ENCODE measurements at regions of chr22 and their contacts with region 1.

Region 1: DNA sequence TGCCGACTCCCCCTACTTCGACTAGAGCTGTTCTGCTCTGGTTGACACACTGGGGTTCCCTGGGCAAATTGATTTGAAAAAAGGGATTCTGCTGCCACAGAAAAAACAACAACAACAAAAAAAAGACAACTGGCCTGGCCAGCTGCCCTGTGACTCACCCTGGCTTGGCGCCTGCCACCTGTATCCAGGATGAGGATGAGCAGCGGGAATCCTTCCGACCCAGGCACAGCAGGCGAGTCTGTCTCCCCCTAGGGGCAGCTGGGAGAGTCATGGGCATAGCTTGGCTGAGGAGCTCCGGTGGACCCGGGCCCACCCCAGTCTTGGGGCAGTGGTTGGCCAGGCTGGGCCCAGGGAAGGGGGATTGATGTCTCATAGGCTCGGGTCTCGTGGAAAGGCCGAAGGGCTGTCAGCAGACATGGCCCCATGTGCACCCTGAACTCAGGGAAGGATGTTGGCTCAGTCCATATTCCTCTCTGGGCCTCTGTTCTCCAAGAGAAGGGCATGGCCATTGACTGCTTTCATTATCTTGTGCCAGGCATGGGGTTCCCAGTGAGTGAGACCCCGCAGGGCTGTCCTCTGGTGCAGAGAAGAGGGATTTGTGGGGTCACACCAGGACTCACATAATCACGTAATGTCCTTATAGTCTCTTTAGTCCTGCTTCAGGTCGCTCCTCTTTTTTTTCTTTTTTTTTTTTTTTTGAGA is 10.4 kb upstream of the SUN2 start:
- DNase-seq: no peak
- ATAC-seq: no peak
- H3K4me3 ChIP-seq: no peak overlapping the region
- H3K27ac ChIP-seq: no peak overlapping the region
- H3K4me1 ChIP-seq: no peaks in the 10 kb centered on the region
- H3K27me3 ChIP-seq: no peaks in the 10 kb centered on the region

Region 2: DNA sequence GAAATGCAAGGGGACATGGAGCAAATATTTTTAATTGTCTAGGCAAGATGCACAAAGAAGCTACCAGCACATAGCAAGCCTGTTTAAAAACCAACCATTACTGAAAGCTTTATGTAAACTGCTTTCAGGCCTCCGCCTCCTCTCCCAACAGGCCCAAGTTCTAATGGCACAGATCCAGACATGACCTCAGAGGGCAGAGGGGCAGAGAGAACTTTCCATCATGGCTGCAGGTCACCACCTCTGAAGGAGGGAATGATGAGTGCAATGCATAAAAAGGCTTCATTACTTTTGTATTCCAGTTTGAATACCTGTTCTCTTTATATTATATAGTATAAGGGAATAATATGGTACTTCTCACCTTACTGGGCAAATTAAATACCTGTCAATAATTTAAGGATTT is 275.3 kb before region 1 on chr22:
- intact Hi-C with region 1: no loop called
- DNase-seq: peak in 1 of 2 donors; percentile 79
- ATAC-seq: peak; percentile 87
- H3K4me3 ChIP-seq: no peak overlapping the region
- H3K27ac ChIP-seq: no peak overlapping the region
- H3K4me1 ChIP-seq: no peaks in the 10 kb centered on the region
- H3K27me3 ChIP-seq: no peaks in the 10 kb centered on the region

Region 3: DNA sequence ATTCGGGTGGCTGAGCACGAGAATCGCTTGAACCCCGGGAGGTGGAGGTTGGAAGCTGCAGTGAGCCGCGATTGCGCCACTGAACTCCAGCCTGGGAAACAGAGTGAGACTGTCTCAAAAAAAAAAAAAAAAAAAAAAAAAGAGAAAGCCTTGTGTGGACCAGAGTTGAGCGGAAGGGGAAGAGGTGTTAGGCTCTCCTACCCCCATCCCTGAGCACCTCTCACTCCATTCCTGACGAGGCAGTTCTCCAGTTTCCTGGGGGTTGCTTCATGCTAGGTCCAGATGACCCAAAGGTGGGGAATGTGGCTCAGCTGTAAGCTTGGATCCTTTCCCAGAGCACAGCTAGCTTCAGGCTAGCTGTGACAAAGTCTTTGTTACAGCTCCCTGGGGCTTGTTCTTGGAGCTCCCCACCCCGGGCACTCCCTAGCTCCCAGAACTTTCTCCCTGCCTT is 36.5 kb after region 1 on chr22:
- intact Hi-C with region 1: no loop called
- DNase-seq: peak in 1 of 2 donors; percentile 71
- ATAC-seq: peak; percentile 73
- H3K4me3 ChIP-seq: no peak overlapping the region
- H3K27ac ChIP-seq: no peak overlapping the region
- H3K4me1 ChIP-seq: no peaks in the 10 kb centered on the region
- H3K27me3 ChIP-seq: no peaks in the 10 kb centered on the region

Region 4: GRCh38 chr22:38862375-38863329 is 96.4 kb after region 1 on chr22:
- intact Hi-C with region 1: loop called in 1 of 2 experiments (anchors 5 kb)
- DNase-seq: peak; percentile 83 to 90
- ATAC-seq: peak; percentile 62
- H3K4me3 ChIP-seq: no peak overlapping the region
- H3K27ac ChIP-seq: peak overlapping the region in 1 of 2 donors; percentile 7
- H3K4me1 ChIP-seq: peaks cover 0 to 3% of the 10 kb centered on the region in 2 donors
- H3K27me3 ChIP-seq: no peaks in the 10 kb centered on the region

Region 5: GRCh38 chr22:38927033-38927781 is 161.0 kb after region 1 on chr22:
- intact Hi-C with region 1: loop called in 1 of 2 experiments (anchors 10 kb)
- DNase-seq: peak; percentile 87 to 92
- ATAC-seq: peak; percentile 69
- H3K4me3 ChIP-seq: peak overlapping the region in 1 of 2 donors; percentile 36
- H3K27ac ChIP-seq: peak overlapping the region in 1 of 2 donors; percentile 21
- H3K4me1 ChIP-seq: no peaks in the 10 kb centered on the region
- H3K27me3 ChIP-seq: no peaks in the 10 kb centered on the region

Region 6: DNA sequence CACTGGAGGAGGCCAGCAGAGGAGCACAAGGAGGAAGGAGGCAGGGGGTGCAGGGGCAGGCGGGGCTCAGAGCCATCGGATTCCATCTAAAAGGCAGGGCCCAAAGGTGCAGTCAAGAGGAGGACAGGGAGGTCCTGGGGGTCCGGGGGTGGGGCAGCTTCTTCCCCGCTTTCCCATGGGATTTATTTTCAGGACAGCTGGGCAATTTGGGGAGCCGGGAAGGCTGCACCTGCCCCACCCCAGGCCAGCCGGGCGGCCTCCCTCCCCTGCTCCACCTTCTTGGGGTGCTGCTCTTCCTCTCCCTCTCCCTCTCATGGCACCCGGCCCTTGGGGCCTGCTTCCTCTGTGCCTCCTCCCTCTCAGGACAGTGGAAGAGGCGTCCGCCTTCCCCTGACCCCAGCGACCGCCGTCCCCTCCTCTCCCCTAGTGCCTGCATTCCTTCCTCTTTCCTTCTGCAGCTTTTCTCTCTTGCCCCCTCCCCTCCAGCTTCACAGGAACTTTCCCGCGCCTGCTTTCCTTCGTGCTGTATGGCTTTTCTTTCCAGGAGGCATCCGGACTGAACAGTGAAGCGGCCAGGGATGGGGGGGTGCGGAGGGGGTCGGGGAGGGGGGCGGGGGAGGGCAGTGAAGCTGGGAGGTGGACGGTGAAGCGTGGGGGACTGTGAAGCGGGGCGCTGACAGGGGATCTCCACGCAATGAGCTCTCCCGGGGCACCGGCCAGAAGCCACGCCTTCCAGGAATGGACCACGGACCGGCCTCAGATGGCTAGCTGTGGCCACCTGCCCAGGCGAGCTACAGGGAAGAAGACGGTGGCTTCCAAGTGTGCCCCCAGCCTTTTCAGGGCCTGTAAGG is 357.7 kb after region 1 on chr22:
- intact Hi-C with region 1: loop called (anchors 10 kb)
- DNase-seq: no peak
- ATAC-seq: no peak
- H3K4me3 ChIP-seq: no peak overlapping the region
- H3K27ac ChIP-seq: no peak overlapping the region
- H3K4me1 ChIP-seq: no peaks in the 10 kb centered on the region
- H3K27me3 ChIP-seq: no peaks in the 10 kb centered on the region